ENCODE measurements at regions of chr1 and their contacts with region 1.

Region 1: GRCh38 chr1:151085953-151086559 is 15.5 kb downstream of the GABPB2 start:
- DNase-seq: no peak
- H3K4me3 ChIP-seq: no peak overlapping the region
- H3K4me1 ChIP-seq: peaks cover 6% of the 10 kb centered on the region
- H3K27me3 ChIP-seq: no peaks in the 10 kb centered on the region

Region 2: GRCh38 chr1:150621497-150622302 is 464.4 kb before region 1 on chr1:
- in situ Hi-C with region 1: no loop called
- DNase-seq: peak in 1 of 2 experiments; percentile 58
- H3K4me3 ChIP-seq: no peak overlapping the region
- H3K4me1 ChIP-seq: no peaks in the 10 kb centered on the region
- H3K27me3 ChIP-seq: no peaks in the 10 kb centered on the region

Region 3: GRCh38 chr1:151156515-151156819 is 70.4 kb after region 1 on chr1 and contains the start of gene TNFAIP8L2:
- in situ Hi-C with region 1: loop called (anchors 5 kb)
- DNase-seq: peak in 1 of 2 experiments; percentile 31
- H3K4me3 ChIP-seq: no peak within 1 kb of the TSS
- H3K4me1 ChIP-seq: no peaks in the 10 kb centered on the region
- H3K27me3 ChIP-seq: no peaks in the 10 kb centered on the region